Mucosa of descending colon (tissue), 3 donors: ENCODE measurements at regions of chr17 and their contacts with region 1.

Region 1: DNA sequence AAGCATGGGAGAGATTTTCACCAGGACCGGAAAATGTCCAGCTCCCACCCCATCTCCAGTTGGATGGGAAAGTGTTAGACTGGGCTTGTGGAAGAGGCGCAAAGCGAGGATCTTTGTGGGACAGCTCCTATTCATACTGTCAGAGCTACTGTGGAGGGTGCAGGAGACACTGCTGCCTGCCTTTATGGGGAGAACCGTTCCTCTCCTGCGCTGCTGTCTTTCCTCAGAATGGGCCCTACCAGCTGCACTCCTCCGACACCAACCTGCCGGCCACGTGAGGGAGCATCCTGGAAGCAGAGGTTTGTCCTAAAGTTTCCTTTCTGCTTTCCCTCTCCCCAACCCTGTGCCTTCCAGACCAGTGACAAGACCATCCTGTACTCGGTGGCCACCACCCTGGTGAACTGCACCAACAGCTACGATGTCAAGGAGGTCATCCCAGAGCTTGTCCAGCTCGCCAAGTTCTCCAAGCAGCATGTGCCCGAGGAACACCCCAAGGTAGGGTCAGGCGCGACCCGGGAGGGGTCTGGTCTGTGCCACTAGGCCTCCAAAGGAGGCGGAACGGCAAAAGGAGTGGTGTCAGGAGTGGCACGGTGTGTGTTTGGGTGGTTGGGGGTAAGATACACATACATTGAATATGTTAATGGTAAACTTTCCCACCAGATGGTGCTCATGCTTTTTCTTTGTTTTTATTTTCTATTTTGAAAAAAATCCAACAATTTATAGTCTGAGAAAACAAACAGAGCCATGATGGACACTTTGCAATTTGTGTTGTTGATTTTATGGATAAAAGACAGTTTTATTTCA is 23.0 kb downstream of the SLC35G3 start:
- DNase-seq: no peak
- ATAC-seq: peak; percentile 34
- H3K4me3 ChIP-seq: no peak overlapping the region
- H3K4me1 ChIP-seq: no peaks in the 10 kb centered on the region
- CTCF ChIP-seq: no peak

Region 2: GRCh38 chr17:34990921-34991365 is 180.2 kb before region 1 on chr17:
- intact Hi-C with region 1: no loop called
- DNase-seq: peak in 1 of 3 donors; percentile 57
- ATAC-seq: peak; percentile 85
- H3K4me3 ChIP-seq: no peak overlapping the region
- H3K4me1 ChIP-seq: peaks cover 11% of the 10 kb centered on the region
- CTCF ChIP-seq: no peak

Region 3: DNA sequence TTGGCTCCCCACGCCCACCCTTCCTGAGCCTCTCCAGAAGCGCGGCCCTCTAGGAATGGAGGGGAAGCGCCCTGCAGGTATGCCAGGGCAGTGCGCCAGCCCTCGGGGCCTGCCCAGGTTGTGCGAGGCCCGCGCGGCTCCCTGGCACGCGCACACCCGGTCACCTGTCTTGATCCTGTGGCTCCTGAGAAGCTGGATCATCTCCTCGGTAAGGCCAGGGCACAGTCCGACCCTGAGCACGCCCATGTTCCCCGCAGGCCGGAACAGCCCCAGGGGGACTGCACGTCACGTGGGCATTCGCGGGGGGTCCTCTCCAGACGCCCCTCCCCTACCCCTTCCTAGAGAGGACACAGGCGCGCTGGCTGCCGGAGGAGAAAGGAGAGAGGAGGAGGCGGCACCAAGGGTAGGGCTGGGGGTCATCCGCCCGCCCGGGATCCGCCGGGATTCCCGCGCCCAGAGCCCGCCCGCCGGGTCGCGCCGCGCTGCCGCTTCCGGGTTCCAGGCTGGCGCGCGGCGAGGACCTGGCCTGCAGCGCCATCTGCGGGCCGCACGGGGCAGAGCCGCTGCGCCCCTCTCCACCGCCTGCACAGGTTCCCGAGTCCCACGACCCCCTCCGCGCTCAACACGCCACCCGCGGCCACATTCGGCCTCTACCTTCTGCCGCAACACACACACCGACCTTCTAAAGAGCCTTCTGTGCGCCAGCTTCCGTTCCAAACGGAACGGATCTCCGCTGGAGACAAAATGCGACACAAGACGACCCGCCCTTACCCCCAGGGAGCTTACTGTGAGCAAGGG is 51.6 kb before region 1 on chr17 and contains the start of gene RAD51D:
- intact Hi-C with region 1: no loop called
- DNase-seq: peak; percentile 74 to 85 (median 80)
- ATAC-seq: peak; percentile 99
- H3K4me3 ChIP-seq: peak within 1 kb of the TSS; percentile 57
- H3K4me1 ChIP-seq: peaks cover 9% of the 10 kb centered on the region
- CTCF ChIP-seq: peak; percentile 91
- total RNA-seq, gene RAD51D: 9.1 to 14.4 (median 11.6) TPM

Region 4: GRCh38 chr17:35537601-35538141 is 366.5 kb after region 1 on chr17 and contains the start of gene SLFN12L:
- intact Hi-C with region 1: loop called in 1 of 2 experiments (anchors 10 kb)
- DNase-seq: no peak
- ATAC-seq: peak; percentile 28
- H3K4me3 ChIP-seq: no peak within 1 kb of the TSS
- H3K4me1 ChIP-seq: no peaks in the 10 kb centered on the region
- CTCF ChIP-seq: no peak
- total RNA-seq, gene SLFN12L: 1.5 to 2.9 (median 2.9) TPM